ENCODE measurements at regions of chr4 and their contacts with region 1.

Region 1: GRCh38 chr4:185395956-185396723 is 416 bp upstream of the LRP2BP start:
- DNase-seq: peak; percentile 88 to 98 (median 96)
- ATAC-seq: peak; percentile 91
- H3K4me3 ChIP-seq: peak overlapping the region; percentile 88
- H3K4me3 Mint-ChIP-seq: peak overlapping the region; percentile 92
- H3K27ac ChIP-seq: peak overlapping the region; percentile 93 to 97
- H3K27ac Mint-ChIP-seq: peak overlapping the region; percentile 92
- H3K4me1 ChIP-seq: peaks cover 11% of the 10 kb centered on the region
- H3K4me1 Mint-ChIP-seq: peaks cover 17% of the 10 kb centered on the region
- H3K27me3 ChIP-seq: no peaks in the 10 kb centered on the region
- H3K27me3 Mint-ChIP-seq: no peaks in the 10 kb centered on the region
- CTCF ChIP-seq: no peak

Region 2: GRCh38 chr4:183876268-183876934 is 1519.7 kb before region 1 on chr4:
- CTCF ChIA-PET with region 1: no interaction called
- POLR2A ChIA-PET with region 1: no interaction called
- intact Hi-C with region 1: no loop called
- DNase-seq: no peak
- ATAC-seq: no peak
- H3K4me3 ChIP-seq: no peak overlapping the region
- H3K4me3 Mint-ChIP-seq: no peak overlapping the region
- H3K27ac ChIP-seq: no peak overlapping the region
- H3K27ac Mint-ChIP-seq: no peak overlapping the region
- H3K4me1 ChIP-seq: no peaks in the 10 kb centered on the region
- H3K4me1 Mint-ChIP-seq: no peaks in the 10 kb centered on the region
- H3K27me3 ChIP-seq: no peaks in the 10 kb centered on the region
- H3K27me3 Mint-ChIP-seq: no peaks in the 10 kb centered on the region
- CTCF ChIP-seq: no peak

Region 3: DNA sequence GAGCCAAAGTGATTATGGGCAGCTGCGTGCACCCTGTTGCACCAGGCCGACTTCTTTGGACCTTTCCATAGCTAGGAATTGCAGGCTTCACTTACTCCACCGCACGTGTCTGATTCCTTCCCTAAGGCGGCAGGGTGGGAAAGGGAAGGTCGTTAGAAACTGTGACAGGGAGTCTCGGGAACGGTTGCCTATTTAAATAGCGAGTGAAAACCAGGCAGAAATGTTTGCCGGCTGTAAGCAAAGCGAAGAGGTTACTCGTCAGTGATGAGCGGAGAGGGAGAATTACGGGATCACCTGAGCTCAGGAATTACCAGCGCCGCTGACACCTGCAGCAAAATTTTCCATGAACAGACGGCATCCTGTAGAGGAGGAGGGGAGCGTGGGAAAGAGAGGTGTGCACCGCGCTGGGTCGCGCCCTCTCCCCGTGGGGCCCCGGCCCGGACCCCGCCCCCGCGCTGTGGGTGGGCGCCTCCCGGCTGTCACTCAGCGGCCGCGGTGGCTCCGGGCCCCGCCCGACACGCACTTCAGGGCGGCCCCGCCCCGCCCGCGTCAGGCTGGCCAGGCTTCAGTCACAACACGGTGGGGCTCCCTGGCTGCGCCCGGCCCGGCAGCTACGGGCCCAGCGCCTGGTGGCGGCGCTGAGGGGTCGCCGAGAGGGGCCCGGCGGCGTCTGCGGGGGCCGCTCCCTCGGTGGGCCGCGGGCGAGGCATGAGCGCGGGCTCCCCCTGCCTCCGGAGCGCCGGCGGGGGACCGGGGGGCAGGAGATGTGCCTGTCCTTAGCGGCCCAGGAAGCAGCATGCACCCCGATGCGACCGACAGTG is 186.9 kb before region 1 on chr4 and contains the start of gene SNX25:
- CTCF ChIA-PET with region 1: no interaction called
- POLR2A ChIA-PET with region 1: interaction called, 22 read pairs
- intact Hi-C with region 1: loop called (anchors 2 to 5 kb)
- DNase-seq: peak; percentile 67 to 93 (median 80)
- ATAC-seq: peak; percentile 89
- H3K4me3 ChIP-seq: peak within 1 kb of the TSS; percentile 69
- H3K4me3 Mint-ChIP-seq: peak within 1 kb of the TSS; percentile 97
- H3K27ac ChIP-seq: no peak within 1 kb of the TSS
- H3K27ac Mint-ChIP-seq: peak within 1 kb of the TSS; percentile 89
- H3K4me1 ChIP-seq: peaks cover 35% of the 10 kb centered on the region
- H3K4me1 Mint-ChIP-seq: peaks cover 48% of the 10 kb centered on the region
- H3K27me3 ChIP-seq: no peaks in the 10 kb centered on the region
- H3K27me3 Mint-ChIP-seq: no peaks in the 10 kb centered on the region
- CTCF ChIP-seq: no peak
- total RNA-seq, gene SNX25: 7.9 to 9.1 TPM

Region 4: DNA sequence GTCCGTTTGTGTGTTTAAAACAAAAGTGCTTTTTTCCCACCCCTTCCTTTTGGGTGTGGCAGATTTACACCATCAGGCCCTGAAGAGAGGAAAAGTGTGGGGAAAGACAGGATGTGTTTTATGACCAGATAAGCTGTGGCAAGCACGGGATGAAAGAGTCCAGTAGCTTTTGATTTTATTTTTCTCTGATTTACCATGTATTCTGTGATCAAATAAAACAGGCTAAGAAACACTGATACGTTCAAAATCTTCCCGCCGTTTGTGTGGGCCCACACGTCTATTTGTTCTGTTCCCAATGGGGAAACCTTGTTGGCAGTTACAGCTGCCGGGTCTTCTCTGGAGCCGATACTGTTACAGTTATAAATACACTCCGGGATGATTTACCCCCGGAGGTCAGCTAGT is 11.2 kb before region 1 on chr4:
- CTCF ChIA-PET with region 1: no interaction called
- POLR2A ChIA-PET with region 1: interaction called, 11 read pairs
- intact Hi-C with region 1: no loop called
- DNase-seq: no peak
- ATAC-seq: no peak
- H3K4me3 ChIP-seq: no peak overlapping the region
- H3K4me3 Mint-ChIP-seq: no peak overlapping the region
- H3K27ac ChIP-seq: no peak overlapping the region
- H3K27ac Mint-ChIP-seq: no peak overlapping the region
- H3K4me1 ChIP-seq: peaks cover 3% of the 10 kb centered on the region
- H3K4me1 Mint-ChIP-seq: peaks cover 12% of the 10 kb centered on the region
- H3K27me3 ChIP-seq: no peaks in the 10 kb centered on the region
- H3K27me3 Mint-ChIP-seq: peaks cover 26% of the 10 kb centered on the region
- CTCF ChIP-seq: no peak

Region 5: GRCh38 chr4:185425647-185426352 is 29.7 kb after region 1 on chr4 and contains the start of gene UFSP2:
- CTCF ChIA-PET with region 1: interaction called, 9 read pairs
- POLR2A ChIA-PET with region 1: interaction called, 88 read pairs
- intact Hi-C with region 1: loop called (anchors 1 kb)
- DNase-seq: peak; percentile 78 to 97 (median 88)
- ATAC-seq: peak; percentile 85
- H3K4me3 ChIP-seq: peak within 1 kb of the TSS; percentile 99
- H3K4me3 Mint-ChIP-seq: peak within 1 kb of the TSS; percentile 94
- H3K27ac ChIP-seq: peak within 1 kb of the TSS; percentile 88 to 99
- H3K27ac Mint-ChIP-seq: peak within 1 kb of the TSS; percentile 91
- H3K4me1 ChIP-seq: peaks cover 18% of the 10 kb centered on the region
- H3K4me1 Mint-ChIP-seq: peaks cover 31% of the 10 kb centered on the region
- H3K27me3 ChIP-seq: no peaks in the 10 kb centered on the region
- H3K27me3 Mint-ChIP-seq: peaks cover 6% of the 10 kb centered on the region
- CTCF ChIP-seq: no peak
- total RNA-seq, gene UFSP2: 14.5 to 16.6 TPM